HepG2 (cell line): ENCODE measurements at regions of chr3 and their contacts with region 1.

Region 1: DNA sequence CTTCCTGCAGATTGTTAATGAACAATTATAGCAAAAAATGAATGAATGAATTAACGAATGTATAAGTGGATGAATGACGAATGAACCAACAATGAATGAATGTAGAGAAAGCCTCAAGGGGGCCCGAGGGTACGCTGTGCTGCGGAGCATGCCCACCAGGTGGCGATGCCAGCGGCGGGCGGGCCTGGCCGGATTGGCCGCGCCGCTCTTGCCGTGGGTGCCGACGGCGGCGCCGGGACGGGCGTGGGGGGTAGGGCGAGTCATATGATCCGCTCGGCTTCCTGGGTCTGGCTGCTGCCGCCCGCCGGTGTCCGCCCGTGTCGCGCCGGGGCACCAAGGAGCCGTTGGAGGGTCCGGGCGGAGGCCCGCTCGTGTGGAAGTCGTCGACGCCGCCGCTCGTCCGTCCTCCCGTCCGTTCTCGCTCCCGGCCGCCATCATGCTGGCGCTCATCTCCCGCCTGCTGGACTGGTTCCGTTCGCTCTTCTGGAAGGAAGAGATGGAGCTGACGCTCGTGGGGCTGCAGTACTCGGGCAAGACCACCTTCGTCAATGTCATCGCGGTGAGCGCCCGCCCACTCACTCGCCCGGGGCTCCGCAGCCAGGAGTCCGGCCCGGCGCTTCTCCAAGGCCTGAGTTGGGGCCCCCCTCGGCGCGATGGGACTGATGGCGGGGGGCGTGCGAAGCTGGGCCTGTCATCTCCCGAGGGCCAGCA is at the start of gene ARL8B:
- DNase-seq: peak; percentile 65
- ATAC-seq: peak; percentile 96
- H3K4me3 ChIP-seq: peak within 1 kb of the TSS; percentile 85 to 92 (median 91)
- H3K27ac ChIP-seq: peak within 1 kb of the TSS; percentile 82
- H3K4me1 ChIP-seq: peaks cover 32% of the 10 kb centered on the region
- H3K27me3 ChIP-seq: no peaks in the 10 kb centered on the region; a peak in 1 of 5 replicates
- CTCF ChIP-seq: peak; percentile 92
- EP300 ChIP-seq: peak in 1 of 2 experiments; percentile 61; a peak in 1 of 4 replicates
- POLR2A ChIP-seq: peak; percentile 79 to 92
- RAD21 ChIP-seq: peak; percentile 62
- total RNA-seq, gene ARL8B: 30.4 and 33.1 TPM in 2 replicates

Region 2: GRCh38 chr3:4712143-4712542 is 410.0 kb before region 1 on chr3:
- CTCF ChIA-PET with region 1: no interaction called
- POLR2A ChIA-PET with region 1: no interaction called
- in situ Hi-C with region 1: no loop called
- intact Hi-C with region 1: loop called (anchors 1 kb)
- DNase-seq: no peak
- ATAC-seq: no peak
- H3K4me3 ChIP-seq: no peak overlapping the region
- H3K27ac ChIP-seq: no peak overlapping the region
- H3K4me1 ChIP-seq: no peaks in the 10 kb centered on the region
- H3K27me3 ChIP-seq: no peaks in the 10 kb centered on the region
- CTCF ChIP-seq: no peak
- EP300 ChIP-seq: no peak
- POLR2A ChIP-seq: no peak
- RAD21 ChIP-seq: no peak

Region 3: DNA sequence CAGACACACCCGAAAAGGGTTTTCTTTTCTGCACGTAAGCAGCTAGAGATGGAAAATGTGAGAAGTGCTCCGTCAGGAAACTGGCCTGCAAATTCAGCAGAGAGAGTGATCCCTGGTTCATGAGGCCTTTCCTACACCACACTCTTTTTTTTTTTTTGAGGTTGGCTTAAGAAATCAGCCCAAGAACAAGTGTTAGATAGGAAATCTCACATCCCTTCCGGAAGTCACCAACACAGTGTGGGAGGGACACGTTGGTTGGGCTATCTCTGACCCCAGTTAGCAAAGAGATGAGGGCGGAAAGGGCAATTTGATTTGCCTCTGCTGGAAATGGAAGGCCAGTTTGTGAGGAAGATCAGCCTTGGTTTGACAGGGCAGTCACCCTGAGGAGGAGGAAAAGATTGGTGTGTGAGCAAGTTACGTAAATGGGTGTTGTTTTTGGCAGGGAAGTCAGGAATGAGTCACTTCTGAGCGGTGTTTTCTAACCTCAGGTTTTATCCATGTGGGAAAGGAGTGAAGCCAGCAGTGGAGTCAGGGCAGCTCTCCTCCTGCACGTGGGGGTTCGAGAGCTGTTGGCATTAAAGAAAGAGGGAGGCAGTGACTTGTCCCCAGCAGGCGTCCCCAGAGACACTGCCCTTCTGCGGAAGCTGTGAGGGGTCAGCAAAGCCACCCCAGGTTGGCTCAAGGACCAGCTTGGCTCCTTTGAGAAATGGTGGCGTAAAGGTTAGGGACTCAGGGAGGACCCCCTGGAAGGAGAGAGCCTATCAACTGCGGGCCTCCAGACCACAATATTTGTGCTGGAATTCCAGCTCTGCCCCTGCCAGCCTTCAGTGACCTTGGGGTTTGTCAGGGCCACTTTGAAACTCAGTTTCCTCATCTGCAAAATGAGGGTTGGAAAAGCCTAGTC is 380.5 kb before region 1 on chr3:
- CTCF ChIA-PET with region 1: no interaction called
- POLR2A ChIA-PET with region 1: no interaction called
- in situ Hi-C with region 1: no loop called
- intact Hi-C with region 1: no loop called
- DNase-seq: peak; percentile 45
- ATAC-seq: no peak
- H3K4me3 ChIP-seq: no peak overlapping the region
- H3K27ac ChIP-seq: no peak overlapping the region
- H3K4me1 ChIP-seq: peaks cover 52% of the 10 kb centered on the region
- H3K27me3 ChIP-seq: no peaks in the 10 kb centered on the region
- CTCF ChIP-seq: no peak
- EP300 ChIP-seq: no peak
- POLR2A ChIP-seq: no peak
- RAD21 ChIP-seq: no peak

Region 4: GRCh38 chr3:5136919-5137429 is 14.8 kb after region 1 on chr3:
- CTCF ChIA-PET with region 1: no interaction called
- POLR2A ChIA-PET with region 1: interaction called, 11 read pairs
- in situ Hi-C with region 1: no loop called
- intact Hi-C with region 1: no loop called
- DNase-seq: no peak
- ATAC-seq: no peak
- H3K4me3 ChIP-seq: no peak overlapping the region
- H3K27ac ChIP-seq: peak overlapping the region; percentile 81
- H3K4me1 ChIP-seq: peaks cover 62% of the 10 kb centered on the region
- H3K27me3 ChIP-seq: no peaks in the 10 kb centered on the region
- CTCF ChIP-seq: no peak
- EP300 ChIP-seq: no peak
- POLR2A ChIP-seq: no peak
- RAD21 ChIP-seq: no peak